ENCODE measurements at regions of chr7 and their contacts with region 1.

Region 1: GRCh38 chr7:157612664-157613561 is 276.1 kb downstream of the DNAJB6 start:
- DNase-seq: peak; percentile 47
- ATAC-seq: peak; percentile 65
- H3K4me3 ChIP-seq: peak overlapping the region; percentile 62
- H3K27ac ChIP-seq: peak overlapping the region; percentile 38
- H3K4me1 ChIP-seq: peaks cover 14% of the 10 kb centered on the region
- H3K27me3 ChIP-seq: no peaks in the 10 kb centered on the region
- CTCF ChIP-seq: no peak; the same call in 1 of the 2 replicates

Region 2: GRCh38 chr7:157564518-157565177 is 48.3 kb before region 1 on chr7:
- CTCF ChIA-PET with region 1: no interaction called
- POLR2A ChIA-PET with region 1: no interaction called
- intact Hi-C with region 1: loop called (anchors 2 kb)
- DNase-seq: peak; percentile 98
- ATAC-seq: peak; percentile 85
- H3K4me3 ChIP-seq: peak overlapping the region; percentile 46; the same call in 1 of the 2 replicates
- H3K27ac ChIP-seq: peak overlapping the region; percentile 99
- H3K4me1 ChIP-seq: peaks cover 36% of the 10 kb centered on the region
- H3K27me3 ChIP-seq: no peaks in the 10 kb centered on the region
- CTCF ChIP-seq: no peak

Region 3: DNA sequence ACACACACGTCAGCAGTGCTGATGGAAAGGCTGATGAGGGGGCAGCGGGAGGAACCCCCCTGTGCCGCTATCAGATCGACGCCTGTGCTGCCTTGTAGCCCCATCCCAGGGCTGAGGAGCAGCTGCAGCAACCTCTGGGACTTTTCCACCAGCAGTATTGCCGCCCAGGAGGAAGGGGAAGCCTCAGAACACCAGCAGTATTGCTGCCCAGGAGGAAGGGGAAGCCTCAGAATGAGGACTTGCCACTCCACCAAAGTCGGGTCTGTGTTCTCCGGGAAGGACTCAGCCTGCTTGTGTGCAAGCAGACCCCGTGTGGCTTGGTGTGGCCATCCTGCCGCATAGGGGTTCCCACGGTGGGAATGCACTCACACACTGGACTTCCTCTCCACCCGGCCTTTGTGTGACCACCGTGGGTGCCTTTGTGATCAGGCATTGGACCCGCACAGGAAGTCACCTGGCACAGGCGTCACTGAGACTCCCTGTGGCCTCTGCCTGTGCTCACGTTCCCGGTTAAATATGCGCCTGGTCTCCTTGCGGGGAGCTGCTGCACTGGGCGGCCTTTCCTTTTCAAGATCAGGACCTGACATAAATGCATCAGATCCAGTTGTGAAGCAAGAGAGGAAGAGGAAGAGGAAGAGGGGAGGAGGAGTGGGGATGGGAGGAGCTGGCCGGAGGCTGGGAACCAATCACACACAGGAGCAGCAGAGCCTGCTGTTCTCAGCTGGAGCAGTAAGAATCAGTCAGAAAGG is 27.6 kb before region 1 on chr7:
- CTCF ChIA-PET with region 1: no interaction called
- POLR2A ChIA-PET with region 1: interaction called, 17 read pairs
- intact Hi-C with region 1: no loop called
- DNase-seq: no peak
- ATAC-seq: no peak
- H3K4me3 ChIP-seq: no peak overlapping the region
- H3K27ac ChIP-seq: no peak overlapping the region
- H3K4me1 ChIP-seq: no peaks in the 10 kb centered on the region
- H3K27me3 ChIP-seq: no peaks in the 10 kb centered on the region
- CTCF ChIP-seq: no peak

Measured in PC-3 (cell line).